ENCODE measurements at regions of chr12 and their contacts with region 1.

Region 1: DNA sequence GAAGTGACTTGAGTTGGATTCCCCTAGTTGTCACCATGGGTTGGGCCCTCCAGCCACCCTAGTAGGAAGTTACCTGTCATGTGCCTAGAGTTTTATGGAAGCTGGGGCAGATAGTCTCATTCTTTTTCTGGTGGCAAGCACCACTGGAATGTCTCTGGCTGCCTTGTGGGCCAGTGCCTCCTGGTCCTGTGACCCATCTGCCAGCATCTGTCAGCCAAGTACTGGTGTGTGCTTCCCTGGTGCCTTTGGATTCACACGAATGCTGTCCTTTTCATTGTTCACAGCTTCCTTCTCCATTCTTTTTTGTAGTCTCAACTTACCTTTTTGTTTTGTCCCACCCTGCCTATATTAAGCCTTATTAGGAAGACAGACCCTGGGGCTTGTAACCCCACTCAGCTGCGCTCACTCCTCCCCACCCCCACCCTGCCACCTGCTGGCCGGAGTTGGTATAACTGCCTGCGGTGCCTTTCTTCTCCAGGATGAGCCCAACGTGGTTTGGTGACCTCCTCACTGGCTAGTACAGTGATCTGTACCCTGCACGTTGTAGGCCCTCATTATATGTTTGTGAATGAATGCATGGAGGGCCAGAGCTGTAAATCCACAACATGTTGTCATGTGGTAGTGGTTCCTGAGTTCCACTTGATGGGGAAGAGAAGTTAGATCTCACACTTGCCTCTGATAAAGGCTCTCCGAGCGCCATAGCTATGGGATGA is 125.7 kb downstream of the TSPAN9 start:
- DNase-seq: no peak
- H3K4me3 ChIP-seq: no peak overlapping the region
- H3K27ac ChIP-seq: no peak overlapping the region
- H3K27me3 ChIP-seq: no peaks in the 10 kb centered on the region
- CTCF ChIP-seq: peak; percentile 95

Region 2: DNA sequence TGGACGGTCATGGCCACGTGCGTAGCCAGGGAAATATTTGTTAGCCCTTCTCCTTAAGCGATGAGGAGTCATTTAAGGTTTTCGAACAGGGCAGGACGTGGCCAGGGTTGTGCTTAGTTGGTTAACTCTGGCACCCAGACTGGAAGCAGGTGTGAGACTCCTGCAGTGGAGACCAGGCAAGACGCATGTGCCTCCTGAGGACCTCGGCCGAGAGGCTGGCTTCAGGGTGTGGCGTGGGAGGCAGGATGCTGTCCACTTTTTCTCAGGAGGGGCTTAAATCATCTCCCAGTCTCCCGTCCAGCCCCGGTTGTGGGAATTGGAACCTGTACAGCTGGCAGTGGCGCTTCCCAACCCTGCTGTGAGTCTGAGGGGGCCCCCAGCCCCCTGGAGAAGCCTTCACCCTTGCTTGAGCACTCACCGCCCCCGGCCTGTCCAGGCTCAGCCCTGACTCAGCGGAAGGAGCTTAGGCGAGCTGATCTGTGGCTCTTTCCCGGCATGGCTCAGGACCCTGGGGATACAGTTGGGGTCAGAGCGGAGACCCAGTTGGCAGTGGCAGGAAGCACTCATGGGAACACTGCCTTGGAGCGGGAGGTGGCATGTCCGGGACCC is 172.0 kb before region 1 on chr12:
- CTCF ChIA-PET with region 1: no interaction called
- POLR2A ChIA-PET with region 1: no interaction called
- DNase-seq: no peak
- H3K4me3 ChIP-seq: no peak overlapping the region
- H3K27ac ChIP-seq: no peak overlapping the region
- H3K27me3 ChIP-seq: no peaks in the 10 kb centered on the region
- CTCF ChIP-seq: no peak

Region 3: GRCh38 chr12:3135522-3136461 is 67.1 kb before region 1 on chr12:
- CTCF ChIA-PET with region 1: interaction called, 49 read pairs
- POLR2A ChIA-PET with region 1: no interaction called
- DNase-seq: peak; percentile 66
- H3K4me3 ChIP-seq: no peak overlapping the region
- H3K27ac ChIP-seq: no peak overlapping the region
- H3K27me3 ChIP-seq: no peaks in the 10 kb centered on the region
- CTCF ChIP-seq: peak; percentile 78

Region 4: DNA sequence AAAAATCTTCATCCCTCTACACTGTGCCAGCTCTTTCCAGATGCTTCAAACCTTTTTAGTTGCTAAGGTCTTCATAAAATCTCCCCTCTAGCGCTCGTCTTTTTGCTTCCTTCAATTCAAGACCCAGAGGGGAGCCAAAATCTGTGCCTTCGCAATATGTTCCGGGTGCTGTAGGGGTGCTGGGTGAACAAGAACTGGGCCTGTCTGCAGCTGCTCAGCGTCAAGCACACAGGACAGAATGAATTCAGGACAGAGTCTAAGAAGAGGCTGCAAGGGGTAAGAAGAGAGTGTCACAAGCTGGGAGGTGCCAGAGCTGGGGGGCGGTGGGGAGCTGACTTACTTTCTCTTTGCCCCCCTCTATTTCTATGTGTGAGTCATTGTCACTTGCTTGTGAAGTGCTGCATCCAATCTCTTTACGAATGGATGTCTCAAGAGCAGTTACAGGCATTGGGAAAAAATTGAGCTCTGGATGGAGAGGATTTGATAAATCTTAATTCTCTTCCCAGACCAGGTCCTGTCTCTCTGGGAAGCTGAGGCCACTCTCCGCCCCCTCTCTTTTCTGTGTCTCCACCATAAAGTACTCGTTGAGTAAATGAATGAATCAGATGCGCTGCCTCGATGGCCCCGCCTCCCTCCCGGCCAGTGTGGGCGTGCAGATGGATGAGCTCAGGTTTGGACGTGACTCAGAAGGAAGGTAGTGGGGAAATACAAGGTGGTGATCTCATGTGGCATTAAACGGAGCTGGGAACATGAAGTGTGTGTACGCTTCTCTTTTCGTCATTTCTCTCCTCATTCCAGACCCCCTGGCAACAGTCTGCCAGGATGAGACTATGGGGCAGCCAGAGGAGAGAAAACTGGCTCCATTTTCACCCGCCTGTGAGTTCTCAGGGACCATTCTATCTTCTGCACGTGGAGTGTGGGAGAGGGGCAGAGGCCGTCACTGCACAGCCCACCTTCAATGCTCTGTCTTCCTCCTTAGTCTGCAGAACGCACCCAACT is 34.4 kb before region 1 on chr12:
- CTCF ChIA-PET with region 1: interaction called, 31 read pairs
- POLR2A ChIA-PET with region 1: no interaction called
- DNase-seq: peak; percentile 90
- H3K4me3 ChIP-seq: peak overlapping the region; percentile 17
- H3K27ac ChIP-seq: peak overlapping the region; percentile 96
- H3K27me3 ChIP-seq: no peaks in the 10 kb centered on the region
- CTCF ChIP-seq: no peak

Region 5: DNA sequence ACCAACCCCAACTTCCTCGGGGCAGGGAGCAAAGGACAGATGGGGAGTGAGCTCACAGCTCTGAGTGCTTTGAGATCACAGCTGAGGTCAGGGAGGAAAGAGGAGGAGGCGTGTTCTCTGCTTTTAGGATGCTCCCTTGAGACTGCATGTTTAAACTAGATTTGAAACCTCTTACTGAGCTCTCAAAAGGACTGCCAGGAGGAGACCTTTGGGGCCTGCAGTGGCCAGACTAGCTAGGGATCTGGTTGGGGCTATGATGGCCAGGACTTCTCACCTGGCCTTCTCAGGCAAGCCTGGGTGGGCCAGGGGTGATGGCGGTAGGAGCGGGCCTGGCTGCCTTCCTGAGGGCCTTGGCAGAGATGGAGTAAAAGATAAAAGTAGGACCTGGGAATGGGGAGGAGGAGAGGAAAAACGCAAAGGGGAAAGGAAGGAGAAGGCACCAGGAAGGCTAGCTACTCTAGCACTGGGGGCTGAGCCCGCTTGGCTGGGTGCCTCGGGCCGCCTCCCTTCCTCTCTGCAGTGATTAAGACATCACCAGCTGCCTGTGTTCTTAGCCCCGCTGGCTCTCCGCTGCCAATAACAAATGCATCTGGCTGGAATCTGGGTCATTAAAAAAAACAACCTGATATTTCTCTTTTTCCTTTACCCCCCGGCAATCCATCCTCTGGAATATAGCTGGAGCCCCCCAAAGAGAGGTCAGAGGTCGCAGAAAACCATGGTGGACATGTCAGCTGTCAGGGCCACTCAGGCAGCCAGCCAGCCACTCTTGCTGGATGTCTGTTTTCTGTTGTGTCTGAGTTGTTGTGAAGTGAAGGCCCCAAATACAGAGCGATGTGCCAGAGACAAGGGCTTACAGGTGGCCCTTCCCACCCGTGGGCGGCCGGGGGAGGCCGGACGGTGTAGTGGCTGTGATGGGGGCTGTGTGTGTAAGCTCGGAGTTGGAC is 15.6 kb after region 1 on chr12:
- CTCF ChIA-PET with region 1: interaction called, 31 read pairs
- POLR2A ChIA-PET with region 1: no interaction called
- DNase-seq: no peak
- H3K4me3 ChIP-seq: no peak overlapping the region
- H3K27ac ChIP-seq: peak overlapping the region; percentile 70
- H3K27me3 ChIP-seq: no peaks in the 10 kb centered on the region
- CTCF ChIP-seq: 0 out of 2 replicates have a peak, but pooled peaks have one; percentile 8

Region 6: GRCh38 chr12:3236345-3237187 is 33.7 kb after region 1 on chr12:
- CTCF ChIA-PET with region 1: interaction called, 23 read pairs
- POLR2A ChIA-PET with region 1: no interaction called
- DNase-seq: no peak
- H3K4me3 ChIP-seq: no peak overlapping the region
- H3K27ac ChIP-seq: no peak overlapping the region
- H3K27me3 ChIP-seq: no peaks in the 10 kb centered on the region
- CTCF ChIP-seq: no peak

Measured in AG04450 (cell line).